Activated CD4-positive, alpha-beta memory T cell treated with anti-CD3 and anti-CD28 coated beads for 36 hours (primary cell): ENCODE measurements at regions of chr20 and their contacts with region 1.

Region 1: GRCh38 chr20:9392892-9393857 is 121.2 kb upstream of the LAMP5 start:
- DNase-seq: peak; percentile 15
- H3K4me3 Mint-ChIP-seq: no peak overlapping the region
- H3K27ac Mint-ChIP-seq: no peak overlapping the region
- H3K4me1 Mint-ChIP-seq: no peaks in the 10 kb centered on the region
- H3K27me3 Mint-ChIP-seq: no peaks in the 10 kb centered on the region

Region 2: DNA sequence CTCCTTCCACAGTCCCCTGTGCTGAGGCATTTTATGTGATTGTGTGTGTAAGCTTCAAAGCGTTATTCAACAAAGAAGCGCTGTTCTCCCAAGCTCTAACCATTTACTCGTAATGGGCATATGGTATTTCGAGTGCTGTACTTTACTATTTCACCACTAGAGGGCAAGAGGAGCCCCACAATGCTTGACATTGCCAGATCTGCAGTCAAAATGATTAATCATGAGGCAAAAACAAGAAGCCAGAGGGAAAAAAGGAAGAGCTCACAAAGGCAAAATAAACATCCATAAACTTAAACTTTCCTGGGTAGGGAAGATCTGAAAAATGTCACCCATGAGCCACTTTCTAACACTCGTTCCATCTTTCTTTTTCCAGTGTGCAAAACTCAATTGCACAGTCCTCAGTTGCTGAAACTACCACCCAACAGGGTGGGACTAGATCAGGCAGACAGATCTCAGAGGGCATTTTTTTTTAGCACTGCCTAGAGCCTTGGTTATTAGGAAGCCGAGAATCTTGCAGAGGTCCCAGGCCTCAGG is 539.3 kb before region 1 on chr20:
- CTCF ChIA-PET with region 1: no interaction called
- POLR2A ChIA-PET with region 1: no interaction called
- intact Hi-C with region 1: loop called (anchors 5 kb)
- DNase-seq: no peak
- H3K4me3 Mint-ChIP-seq: no peak overlapping the region
- H3K27ac Mint-ChIP-seq: no peak overlapping the region
- H3K4me1 Mint-ChIP-seq: no peaks in the 10 kb centered on the region
- H3K27me3 Mint-ChIP-seq: no peaks in the 10 kb centered on the region

Region 3: DNA sequence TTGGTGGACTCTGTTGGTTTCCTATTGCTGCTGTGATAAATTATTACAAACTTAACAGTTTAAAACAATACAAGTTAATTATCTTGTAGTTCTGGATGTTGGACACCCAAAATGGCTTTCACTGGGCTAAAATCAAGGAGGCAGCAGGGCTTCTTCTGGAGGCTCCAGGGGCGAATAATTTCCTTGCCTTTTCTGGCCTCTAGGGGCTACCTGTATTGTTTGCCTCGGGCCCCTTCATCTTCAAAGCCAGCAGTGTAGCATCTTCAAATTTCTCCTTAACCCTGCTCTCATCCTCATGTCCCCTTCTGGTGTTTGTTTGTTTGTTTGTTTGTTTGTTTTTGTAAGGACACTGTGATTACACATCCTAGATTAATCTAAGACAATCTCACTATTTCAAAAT is 581.1 kb after region 1 on chr20:
- CTCF ChIA-PET with region 1: no interaction called
- POLR2A ChIA-PET with region 1: no interaction called
- intact Hi-C with region 1: no loop called
- DNase-seq: no peak
- H3K4me3 Mint-ChIP-seq: no peak overlapping the region
- H3K27ac Mint-ChIP-seq: no peak overlapping the region
- H3K4me1 Mint-ChIP-seq: peaks cover 5% of the 10 kb centered on the region
- H3K27me3 Mint-ChIP-seq: peaks cover 4% of the 10 kb centered on the region